Right cardiac atrium (tissue), 5 donors: ENCODE measurements at regions of chr9 and their contacts with region 1.

Region 1: GRCh38 chr9:133144137-133144903 is 19.4 kb downstream of the GBGT1 start:
- DNase-seq: peak; percentile 67 to 91 (median 87)
- ATAC-seq: peak; percentile 15 to 45
- H3K4me3 ChIP-seq: no peak overlapping the region
- H3K27ac ChIP-seq: peak overlapping the region; percentile 9
- H3K4me1 ChIP-seq: peaks cover 5% of the 10 kb centered on the region
- H3K27me3 ChIP-seq: no peaks in the 10 kb centered on the region

Region 2: GRCh38 chr9:133103183-133103986 is 40.9 kb before region 1 on chr9:
- intact Hi-C with region 1: loop called (anchors 1 to 2 kb)
- DNase-seq: peak; percentile 66 to 89 (median 87)
- ATAC-seq: peak; percentile 53 to 72
- H3K4me3 ChIP-seq: no peak overlapping the region
- H3K27ac ChIP-seq: no peak overlapping the region
- H3K4me1 ChIP-seq: no peaks in the 10 kb centered on the region
- H3K27me3 ChIP-seq: no peaks in the 10 kb centered on the region